ENCODE measurements at regions of chr3 and their contacts with region 1.

Region 1: GRCh38 chr3:71360764-71361163 is 222.8 kb downstream of the FOXP1 start:
- DNase-seq: peak; percentile 82
- ATAC-seq: peak; percentile 61
- H3K4me3 ChIP-seq: peak overlapping the region; percentile 32 to 67 (median 48)
- H3K4me3 Mint-ChIP-seq: peak overlapping the region; percentile 89
- H3K27ac ChIP-seq: peak overlapping the region; percentile 78 to 87
- H3K27ac Mint-ChIP-seq: peak overlapping the region; percentile 95
- H3K4me1 ChIP-seq: peaks cover 83% of the 10 kb centered on the region in 2 donors
- H3K4me1 Mint-ChIP-seq: peaks cover 83% of the 10 kb centered on the region
- H3K27me3 ChIP-seq: no peaks in the 10 kb centered on the region
- H3K27me3 Mint-ChIP-seq: no peaks in the 10 kb centered on the region
- CTCF ChIP-seq: no peak

Region 2: DNA sequence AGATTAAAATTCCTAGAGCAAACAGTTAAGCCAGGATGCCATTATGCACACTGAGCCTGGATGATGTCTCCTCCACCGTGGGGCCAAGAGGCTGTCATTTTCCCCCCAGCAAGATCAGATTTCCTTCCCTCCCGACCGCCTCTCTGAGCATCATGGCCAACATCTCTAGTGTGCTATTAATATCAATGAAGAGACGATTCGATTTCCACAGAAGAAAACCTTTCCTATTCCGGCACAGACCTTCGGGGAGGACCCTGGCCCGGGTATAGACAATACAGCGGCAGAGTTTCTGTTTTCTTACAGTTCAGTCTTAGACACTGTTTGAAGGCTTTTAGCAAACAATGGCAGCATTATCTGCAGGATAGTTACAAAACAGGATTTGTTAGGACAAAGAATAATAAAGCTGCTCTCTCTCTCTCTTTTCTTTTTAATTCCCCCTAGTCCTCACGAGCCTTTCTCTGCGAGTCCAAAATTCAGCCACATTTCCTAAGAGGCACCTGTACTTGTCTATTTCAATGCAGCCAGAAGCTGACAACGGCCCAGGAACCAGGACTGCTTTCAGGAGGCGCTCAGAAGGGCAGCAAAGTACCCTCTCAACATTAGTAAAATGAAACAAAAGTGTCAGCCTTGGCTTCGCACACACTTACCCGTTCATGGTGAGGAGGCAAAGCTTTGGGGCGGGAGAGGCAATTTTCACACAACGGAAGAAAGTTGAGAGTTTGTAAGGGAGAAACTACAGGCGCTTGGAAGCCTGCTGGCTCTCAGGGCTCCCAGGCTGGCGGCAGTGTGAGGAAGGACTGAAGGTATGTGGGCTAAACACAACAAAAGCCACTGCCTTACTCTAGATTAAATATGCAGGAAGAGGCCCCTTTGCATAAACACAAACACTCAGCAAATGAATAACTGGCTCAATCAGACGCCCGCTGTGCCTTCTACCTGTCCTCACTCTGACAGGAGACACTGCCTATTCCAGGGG is 55.2 kb before region 1 on chr3:
- CTCF ChIA-PET with region 1: interaction called, 3 read pairs
- POLR2A ChIA-PET with region 1: no interaction called
- intact Hi-C with region 1: loop called (anchors 5 kb)
- DNase-seq: peak; percentile 49
- ATAC-seq: peak; percentile 60
- H3K4me3 ChIP-seq: peak overlapping the region; percentile 50 to 85 (median 67)
- H3K4me3 Mint-ChIP-seq: peak overlapping the region; percentile 88
- H3K27ac ChIP-seq: peak overlapping the region; percentile 70 to 84
- H3K27ac Mint-ChIP-seq: peak overlapping the region; percentile 94
- H3K4me1 ChIP-seq: peaks cover 47 to 57% of the 10 kb centered on the region in 2 donors
- H3K4me1 Mint-ChIP-seq: peaks cover 77% of the 10 kb centered on the region
- H3K27me3 ChIP-seq: no peaks in the 10 kb centered on the region
- H3K27me3 Mint-ChIP-seq: no peaks in the 10 kb centered on the region
- CTCF ChIP-seq: no peak

Region 3: DNA sequence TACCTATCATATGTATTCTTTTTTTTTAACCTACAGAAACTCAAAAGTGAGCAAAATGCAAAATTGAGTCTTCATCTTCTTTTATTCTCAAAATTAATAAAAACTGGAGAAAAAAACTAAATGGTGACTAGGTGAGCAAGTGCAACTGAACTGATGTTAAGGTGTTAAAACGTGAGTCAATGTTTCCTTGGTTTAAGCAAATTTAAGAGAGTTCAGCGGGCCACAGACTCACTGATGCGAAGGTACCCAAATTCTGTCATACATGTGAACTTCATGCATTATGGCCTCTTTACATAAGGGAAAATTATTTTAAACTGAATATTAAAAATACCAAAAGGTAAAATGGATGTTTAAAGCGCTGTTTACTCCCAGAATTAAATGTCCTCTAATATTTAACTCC is 16.1 kb after region 1 on chr3:
- CTCF ChIA-PET with region 1: interaction called, 7 read pairs
- POLR2A ChIA-PET with region 1: no interaction called
- intact Hi-C with region 1: loop called (anchors 2 kb)
- DNase-seq: peak; percentile 68
- ATAC-seq: peak; percentile 88
- H3K4me3 ChIP-seq: peak overlapping the region in 1 of 5 experiments; percentile 32
- H3K4me3 Mint-ChIP-seq: peak overlapping the region; percentile 58
- H3K27ac ChIP-seq: peak overlapping the region; percentile 70 to 83
- H3K27ac Mint-ChIP-seq: peak overlapping the region; percentile 79
- H3K4me1 ChIP-seq: peaks cover 44 to 73% of the 10 kb centered on the region in 2 donors
- H3K4me1 Mint-ChIP-seq: peaks cover 71% of the 10 kb centered on the region
- H3K27me3 ChIP-seq: no peaks in the 10 kb centered on the region
- H3K27me3 Mint-ChIP-seq: no peaks in the 10 kb centered on the region
- CTCF ChIP-seq: no peak

Region 4: GRCh38 chr3:71389911-71390573 is 29.3 kb after region 1 on chr3:
- CTCF ChIA-PET with region 1: interaction called, 8 read pairs
- POLR2A ChIA-PET with region 1: interaction called, 5 read pairs
- intact Hi-C with region 1: loop called (anchors 1 kb)
- DNase-seq: peak; percentile 57
- ATAC-seq: peak; percentile 11
- H3K4me3 ChIP-seq: peak overlapping the region; percentile 27 to 40 (median 33)
- H3K4me3 Mint-ChIP-seq: peak overlapping the region; percentile 84
- H3K27ac ChIP-seq: peak overlapping the region; percentile 95 to 99
- H3K27ac Mint-ChIP-seq: peak overlapping the region; percentile 98
- H3K4me1 ChIP-seq: peaks cover 84 to 90% of the 10 kb centered on the region in 2 donors
- H3K4me1 Mint-ChIP-seq: peaks cover 70% of the 10 kb centered on the region
- H3K27me3 ChIP-seq: no peaks in the 10 kb centered on the region
- H3K27me3 Mint-ChIP-seq: no peaks in the 10 kb centered on the region
- CTCF ChIP-seq: no peak

Region 5: GRCh38 chr3:71423151-71423906 is 62.6 kb after region 1 on chr3:
- CTCF ChIA-PET with region 1: interaction called, 3 read pairs
- POLR2A ChIA-PET with region 1: interaction called, 3 read pairs
- intact Hi-C with region 1: loop called (anchors 1 kb)
- DNase-seq: no peak
- ATAC-seq: no peak
- H3K4me3 ChIP-seq: no peak overlapping the region
- H3K4me3 Mint-ChIP-seq: peak overlapping the region; percentile 81
- H3K27ac ChIP-seq: peak overlapping the region; percentile 98
- H3K27ac Mint-ChIP-seq: peak overlapping the region; percentile 99
- H3K4me1 ChIP-seq: peaks cover 79 to 82% of the 10 kb centered on the region in 2 donors
- H3K4me1 Mint-ChIP-seq: peaks cover 84% of the 10 kb centered on the region
- H3K27me3 ChIP-seq: no peaks in the 10 kb centered on the region
- H3K27me3 Mint-ChIP-seq: no peaks in the 10 kb centered on the region
- CTCF ChIP-seq: no peak